GM12878 (cell line): ENCODE measurements at regions of chr2 and their contacts with region 1.

Region 1: DNA sequence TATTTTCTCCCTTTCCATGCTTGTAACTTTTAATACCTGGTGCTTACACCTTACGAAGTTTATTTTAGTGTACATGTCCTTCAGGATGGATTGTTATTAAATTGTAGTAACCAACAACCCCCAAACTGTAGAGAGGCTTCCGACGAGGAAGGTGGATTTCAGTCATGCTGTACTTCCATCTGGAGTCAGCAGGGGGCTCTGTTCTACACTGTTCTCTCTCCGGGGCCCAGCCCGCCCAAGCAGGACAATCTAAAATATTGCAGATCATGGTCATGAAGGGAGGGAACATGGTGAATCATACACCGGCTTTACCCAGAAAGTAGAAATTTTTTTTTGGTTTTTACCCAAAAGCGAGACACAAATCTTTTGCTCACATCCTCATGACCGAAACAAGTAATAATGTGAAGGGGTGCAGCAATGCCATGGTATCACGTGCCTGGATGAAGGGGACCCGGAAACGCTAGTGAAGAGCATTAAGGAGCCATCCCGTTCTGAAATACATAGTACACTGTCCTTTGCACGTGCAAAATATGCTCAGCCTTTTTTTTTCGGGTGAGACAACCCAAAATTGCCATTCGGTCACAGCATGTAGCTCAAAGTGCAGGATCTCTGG is 884.8 kb downstream of the EPHA4 start:
- DNase-seq: no peak
- ATAC-seq: peak; percentile 85
- H3K4me3 ChIP-seq: no peak overlapping the region
- H3K27ac ChIP-seq: no peak overlapping the region
- H3K4me1 ChIP-seq: no peaks in the 10 kb centered on the region
- H3K27me3 ChIP-seq: no peaks in the 10 kb centered on the region
- CTCF ChIP-seq: peak; percentile 78 to 80 (median 78)
- EP300 ChIP-seq: no peak
- POLR2A ChIP-seq: no peak
- RAD21 ChIP-seq: peak; percentile 73

Region 2: DNA sequence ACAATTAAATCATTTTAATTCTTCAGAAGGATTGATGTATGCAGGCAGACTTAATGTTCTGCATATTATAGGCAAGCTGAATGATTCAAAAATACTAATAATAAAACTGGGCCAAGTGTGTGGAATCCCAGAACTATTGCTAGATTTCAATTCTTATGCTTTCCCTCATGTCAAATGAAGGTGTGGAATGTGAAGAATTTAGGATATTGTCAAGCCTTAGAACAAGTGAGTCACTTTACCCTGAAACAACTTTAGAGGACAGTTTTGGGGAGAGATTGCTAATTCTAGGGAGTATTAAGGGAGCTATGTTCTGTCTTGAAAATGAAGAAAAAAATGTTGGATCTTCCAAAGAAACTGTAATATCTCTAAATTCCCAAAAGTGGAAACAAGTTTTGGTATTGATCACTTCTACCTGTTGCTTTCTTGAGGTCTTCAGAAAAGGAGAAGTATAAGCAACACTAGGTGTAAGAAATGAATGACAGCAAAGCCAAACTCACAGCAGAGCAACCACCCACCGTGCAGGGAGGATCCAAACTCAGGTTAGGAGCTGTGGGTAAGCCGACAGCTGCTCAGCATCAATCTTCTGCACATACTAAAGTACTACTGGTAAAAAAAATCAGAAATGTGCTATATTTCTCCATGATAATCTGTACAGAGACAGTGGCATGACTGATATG is 241.8 kb before region 1 on chr2:
- CTCF ChIA-PET with region 1: no interaction called
- POLR2A ChIA-PET with region 1: no interaction called
- RAD21 ChIA-PET with region 1: no interaction called
- SMC1A ChIA-PET with region 1: no interaction called
- in situ Hi-C with region 1: no loop called
- intact Hi-C with region 1: no loop called
- DNase-seq: no peak
- ATAC-seq: no peak
- H3K4me3 ChIP-seq: no peak overlapping the region
- H3K27ac ChIP-seq: no peak overlapping the region
- H3K4me1 ChIP-seq: no peaks in the 10 kb centered on the region
- H3K27me3 ChIP-seq: no peaks in the 10 kb centered on the region
- CTCF ChIP-seq: no peak
- EP300 ChIP-seq: no peak
- POLR2A ChIP-seq: no peak
- RAD21 ChIP-seq: no peak

Region 3: GRCh38 chr2:221034973-221035372 is 347.6 kb after region 1 on chr2:
- CTCF ChIA-PET with region 1: no interaction called
- POLR2A ChIA-PET with region 1: no interaction called
- RAD21 ChIA-PET with region 1: no interaction called
- SMC1A ChIA-PET with region 1: no interaction called
- in situ Hi-C with region 1: no loop called
- intact Hi-C with region 1: loop called (anchors 5 kb)
- DNase-seq: no peak
- ATAC-seq: no peak
- H3K4me3 ChIP-seq: no peak overlapping the region
- H3K27ac ChIP-seq: no peak overlapping the region
- H3K4me1 ChIP-seq: no peaks in the 10 kb centered on the region
- H3K27me3 ChIP-seq: no peaks in the 10 kb centered on the region
- CTCF ChIP-seq: no peak
- EP300 ChIP-seq: no peak
- POLR2A ChIP-seq: no peak
- RAD21 ChIP-seq: no peak

Region 4: DNA sequence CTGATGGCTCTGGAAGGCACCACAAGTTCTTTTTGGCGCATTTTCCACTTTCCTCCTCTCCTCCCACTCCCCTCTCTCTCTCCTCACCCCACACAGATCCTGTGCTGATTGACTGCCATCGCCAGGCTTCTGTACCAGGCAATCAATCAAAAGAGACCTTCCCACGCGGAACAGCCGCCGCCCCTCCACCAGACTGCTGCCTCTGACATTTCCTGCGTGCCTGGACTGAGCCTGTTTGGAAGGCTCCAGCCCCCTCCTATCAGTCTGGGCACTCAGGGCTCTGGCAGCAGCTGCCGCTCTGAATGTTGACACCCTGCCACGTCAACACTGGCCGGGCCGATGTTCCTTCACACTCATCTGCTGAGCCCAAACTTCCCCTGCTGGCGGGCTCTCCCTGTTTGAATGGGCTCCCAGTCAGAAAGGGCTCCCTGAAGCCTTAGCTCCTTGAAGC is 417.0 kb after region 1 on chr2:
- CTCF ChIA-PET with region 1: interaction called, 5 read pairs
- POLR2A ChIA-PET with region 1: no interaction called
- RAD21 ChIA-PET with region 1: no interaction called
- SMC1A ChIA-PET with region 1: interaction called, 3 read pairs
- in situ Hi-C with region 1: no loop called
- intact Hi-C with region 1: loop called (anchors 10 kb)
- DNase-seq: no peak
- ATAC-seq: peak; percentile 86
- H3K4me3 ChIP-seq: no peak overlapping the region
- H3K27ac ChIP-seq: no peak overlapping the region; the same call in 1 of the 2 replicates
- H3K4me1 ChIP-seq: peaks cover 9% of the 10 kb centered on the region; the same call in 1 of the 2 replicates
- H3K27me3 ChIP-seq: no peaks in the 10 kb centered on the region
- CTCF ChIP-seq: no peak
- EP300 ChIP-seq: no peak
- POLR2A ChIP-seq: no peak
- RAD21 ChIP-seq: no peak

Region 5: GRCh38 chr2:221293949-221294742 is 606.8 kb after region 1 on chr2:
- CTCF ChIA-PET with region 1: no interaction called
- POLR2A ChIA-PET with region 1: no interaction called
- RAD21 ChIA-PET with region 1: no interaction called
- SMC1A ChIA-PET with region 1: interaction called, 3 read pairs
- in situ Hi-C with region 1: no loop called
- intact Hi-C with region 1: loop called (anchors 5 kb)
- DNase-seq: no peak
- ATAC-seq: peak; percentile 75
- H3K4me3 ChIP-seq: no peak overlapping the region
- H3K27ac ChIP-seq: no peak overlapping the region
- H3K4me1 ChIP-seq: no peaks in the 10 kb centered on the region
- H3K27me3 ChIP-seq: no peaks in the 10 kb centered on the region
- CTCF ChIP-seq: no peak
- EP300 ChIP-seq: no peak
- POLR2A ChIP-seq: no peak
- RAD21 ChIP-seq: no peak

Region 6: GRCh38 chr2:221969087-221969829 is 1281.9 kb after region 1 on chr2:
- CTCF ChIA-PET with region 1: no interaction called
- POLR2A ChIA-PET with region 1: no interaction called
- RAD21 ChIA-PET with region 1: no interaction called
- SMC1A ChIA-PET with region 1: no interaction called
- in situ Hi-C with region 1: loop called (anchors 10 kb)
- intact Hi-C with region 1: loop called (anchors 5 kb)
- DNase-seq: no peak
- ATAC-seq: peak; percentile 76
- H3K4me3 ChIP-seq: no peak overlapping the region
- H3K27ac ChIP-seq: no peak overlapping the region
- H3K4me1 ChIP-seq: no peaks in the 10 kb centered on the region
- H3K27me3 ChIP-seq: no peaks in the 10 kb centered on the region
- CTCF ChIP-seq: peak; percentile 54 to 65 (median 54)
- EP300 ChIP-seq: no peak
- POLR2A ChIP-seq: no peak
- RAD21 ChIP-seq: peak; percentile 73